Activated CD4-positive, alpha-beta T cell treated with anti-CD3 and anti-CD28 coated beads, Interleukin-2, amount 10 ng/mL, durations not matched to agents 24 days and 14 days (primary cell): ENCODE measurements at regions of chr9 and their contacts with region 1.

Region 1: GRCh38 chr9:123929870-123930831 is at the start of gene DENND1A:
- DNase-seq: peak; percentile 96
- H3K4me3 Mint-ChIP-seq: peak within 1 kb of the TSS; percentile 81
- H3K27ac Mint-ChIP-seq: peak within 1 kb of the TSS; percentile 75
- H3K4me1 Mint-ChIP-seq: peaks cover 34% of the 10 kb centered on the region
- H3K27me3 Mint-ChIP-seq: peaks cover 17% of the 10 kb centered on the region
- total RNA-seq, gene DENND1A: 22.3 and 25.2 TPM in 2 replicates

Region 2: GRCh38 chr9:123544007-123544827 is 385.9 kb before region 1 on chr9:
- intact Hi-C with region 1: loop called (anchors 1 kb)
- DNase-seq: peak; percentile 68
- H3K4me3 Mint-ChIP-seq: no peak overlapping the region
- H3K27ac Mint-ChIP-seq: no peak overlapping the region
- H3K4me1 Mint-ChIP-seq: peaks cover 7% of the 10 kb centered on the region
- H3K27me3 Mint-ChIP-seq: peaks cover 1% of the 10 kb centered on the region

Region 3: GRCh38 chr9:123637945-123638634 is 292.1 kb before region 1 on chr9:
- intact Hi-C with region 1: loop called (anchors 5 kb)
- DNase-seq: peak; percentile 84
- H3K4me3 Mint-ChIP-seq: peak overlapping the region; percentile 77
- H3K27ac Mint-ChIP-seq: peak overlapping the region; percentile 13
- H3K4me1 Mint-ChIP-seq: peaks cover 34% of the 10 kb centered on the region
- H3K27me3 Mint-ChIP-seq: peaks cover 26% of the 10 kb centered on the region

Region 4: GRCh38 chr9:123997665-123998277 is 67.6 kb after region 1 on chr9:
- intact Hi-C with region 1: loop called (anchors 2 kb)
- DNase-seq: peak; percentile 69
- H3K4me3 Mint-ChIP-seq: peak overlapping the region; percentile 48
- H3K27ac Mint-ChIP-seq: peak overlapping the region; percentile 46
- H3K4me1 Mint-ChIP-seq: peaks cover 27% of the 10 kb centered on the region
- H3K27me3 Mint-ChIP-seq: peaks cover 75% of the 10 kb centered on the region

Region 5: DNA sequence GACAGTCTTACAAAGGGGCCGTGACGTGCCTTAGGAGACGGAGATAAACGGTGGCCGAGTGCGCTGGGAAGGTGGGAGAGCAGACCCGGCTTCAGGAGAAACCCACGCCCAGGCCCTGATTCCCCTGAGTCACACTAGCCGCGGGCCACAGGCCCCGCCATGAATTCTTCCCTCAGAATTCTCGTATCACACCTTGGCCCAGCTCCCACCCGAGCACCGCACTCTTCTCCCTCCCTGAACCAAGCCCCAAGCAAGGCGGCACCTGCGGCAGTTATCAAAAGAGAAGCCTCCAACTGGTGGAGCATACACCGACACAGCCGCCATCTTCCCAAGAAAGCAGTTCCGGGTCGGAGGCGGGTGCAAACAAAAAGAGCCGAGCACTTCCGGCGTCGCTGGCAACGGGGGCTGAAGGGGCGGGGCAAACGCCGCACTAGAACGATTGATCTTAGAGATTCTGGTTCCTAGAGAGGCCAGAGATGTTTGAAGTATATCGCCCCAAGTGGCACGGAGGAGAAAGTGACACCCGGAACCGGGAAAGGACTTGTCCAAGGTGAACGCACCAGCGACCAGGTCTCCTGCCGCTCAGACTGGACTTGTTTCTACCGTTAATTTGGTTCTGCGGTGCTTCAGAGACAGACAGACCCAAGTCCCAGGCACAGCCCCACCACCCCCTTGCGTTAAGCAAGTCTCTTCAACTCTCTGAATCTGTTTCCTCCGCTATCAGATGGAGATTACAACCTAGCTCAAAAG is 485.1 kb after region 1 on chr9 and contains the start of gene PSMB7:
- intact Hi-C with region 1: loop called (anchors 2 kb)
- DNase-seq: peak; percentile 99
- H3K4me3 Mint-ChIP-seq: peak within 1 kb of the TSS; percentile 96
- H3K27ac Mint-ChIP-seq: peak within 1 kb of the TSS; percentile 95
- H3K4me1 Mint-ChIP-seq: peaks cover 26% of the 10 kb centered on the region
- H3K27me3 Mint-ChIP-seq: no peaks in the 10 kb centered on the region
- total RNA-seq, gene PSMB7: 223 and 225 TPM in 2 replicates